Pancreas (tissue), 10 donors: ENCODE measurements at regions of chr1 and their contacts with region 1.

Region 1: GRCh38 chr1:21874778-21875547 is 62.1 kb downstream of the HSPG2 start:
- DNase-seq: peak in 2 of 6 donors; percentile 49 to 74
- ATAC-seq: no peak
- H3K4me3 ChIP-seq: no peak overlapping the region
- H3K27ac ChIP-seq: no peak overlapping the region
- H3K4me1 ChIP-seq: no peaks in the 10 kb centered on the region
- H3K27me3 ChIP-seq: no peaks in the 10 kb centered on the region
- CTCF ChIP-seq: no peak

Region 2: DNA sequence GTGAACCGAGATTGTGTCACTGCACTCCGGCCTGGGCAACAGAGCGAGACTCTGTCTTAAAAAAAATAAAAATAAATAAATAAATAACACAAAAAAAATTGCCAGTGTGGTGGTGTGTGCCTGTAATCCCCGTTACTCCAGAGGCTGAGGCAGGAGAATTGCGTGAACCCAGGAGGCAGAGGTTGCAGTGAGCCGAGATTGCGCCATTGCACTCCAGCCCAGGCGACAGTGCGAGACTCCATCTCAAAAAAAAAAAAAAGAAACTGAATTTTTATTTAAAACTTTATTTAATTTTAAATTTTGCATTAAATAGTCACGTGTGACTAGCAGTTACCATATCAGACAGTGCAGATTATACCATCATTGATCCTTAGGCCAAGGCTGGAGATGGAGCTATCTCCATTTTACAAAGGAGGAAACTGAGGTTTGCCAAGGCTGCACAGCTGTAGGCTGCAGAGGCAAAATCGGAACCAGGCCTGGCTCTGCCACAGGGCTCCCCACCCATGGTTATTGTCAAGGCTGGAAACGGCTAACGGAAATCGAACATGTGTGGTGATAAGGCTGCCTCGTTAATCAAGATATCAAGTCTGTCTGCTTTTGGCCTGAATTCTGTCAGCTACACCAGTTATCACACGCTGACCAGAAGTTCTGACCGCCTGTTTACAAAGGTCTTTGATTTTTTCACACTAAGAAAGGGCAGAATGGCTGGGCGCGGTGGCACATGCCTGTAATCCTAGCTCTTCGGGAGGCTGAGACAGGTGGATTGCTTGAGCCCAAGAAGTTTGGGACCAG is 41.7 kb after region 1 on chr1:
- intact Hi-C with region 1: no loop called
- DNase-seq: no peak
- ATAC-seq: peak in 2 of 4 donors; percentile 8 to 11
- H3K4me3 ChIP-seq: no peak overlapping the region
- H3K27ac ChIP-seq: peak overlapping the region in 2 of 4 donors; percentile 19 to 37
- H3K4me1 ChIP-seq: peaks cover 29 to 42% (median 37%) of the 10 kb centered on the region in 3 donors
- H3K27me3 ChIP-seq: no peaks in the 10 kb centered on the region
- CTCF ChIP-seq: no peak

Region 3: DNA sequence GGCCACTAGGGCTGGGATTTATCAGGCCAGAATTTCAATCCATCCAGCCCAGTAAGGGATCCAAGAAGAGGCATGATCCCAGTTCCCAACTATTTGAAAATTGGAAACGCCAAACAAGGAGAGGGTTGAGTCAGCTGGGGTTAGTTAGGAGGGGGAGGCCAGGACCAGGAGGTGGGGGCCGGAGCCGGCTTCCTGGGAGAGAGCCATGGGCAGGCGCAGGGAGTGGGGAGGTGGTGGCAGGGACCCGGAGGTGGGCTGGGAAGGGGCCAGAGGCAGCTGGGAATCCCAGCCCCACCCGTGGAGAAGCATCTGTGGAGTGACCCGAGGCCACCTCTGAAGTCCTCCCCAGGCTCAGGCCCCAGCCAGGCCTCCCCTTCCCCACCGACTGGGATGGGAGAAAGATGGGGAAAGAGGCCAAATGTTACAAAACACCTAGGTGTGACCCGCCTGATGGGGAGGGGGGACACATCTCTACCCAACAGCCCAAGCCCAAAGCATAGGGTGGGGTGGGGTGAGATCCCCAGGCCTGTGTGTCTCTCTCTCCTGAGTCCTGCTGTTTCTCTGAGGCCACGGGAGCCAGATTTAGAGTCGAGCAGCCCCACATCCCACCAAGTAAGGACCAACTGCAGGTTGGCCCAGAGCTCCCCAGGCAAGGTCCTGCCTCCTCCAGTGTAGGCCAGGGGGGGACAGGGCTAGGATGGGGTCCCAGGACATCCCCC is 52.0 kb after region 1 on chr1:
- intact Hi-C with region 1: loop called in 1 of 3 experiments (anchors 5 kb)
- DNase-seq: no peak
- ATAC-seq: peak in 3 of 4 donors; percentile 17 to 36 (median 18)
- H3K4me3 ChIP-seq: no peak overlapping the region
- H3K27ac ChIP-seq: peak overlapping the region in 3 of 4 donors; percentile 17 to 50 (median 17)
- H3K4me1 ChIP-seq: peaks cover 0 to 8% (median 0%) of the 10 kb centered on the region in 3 donors
- H3K27me3 ChIP-seq: no peaks in the 10 kb centered on the region
- CTCF ChIP-seq: no peak